Thyroid gland (tissue), 4 donors: ENCODE measurements at regions of chr1 and their contacts with region 1.

Region 1: DNA sequence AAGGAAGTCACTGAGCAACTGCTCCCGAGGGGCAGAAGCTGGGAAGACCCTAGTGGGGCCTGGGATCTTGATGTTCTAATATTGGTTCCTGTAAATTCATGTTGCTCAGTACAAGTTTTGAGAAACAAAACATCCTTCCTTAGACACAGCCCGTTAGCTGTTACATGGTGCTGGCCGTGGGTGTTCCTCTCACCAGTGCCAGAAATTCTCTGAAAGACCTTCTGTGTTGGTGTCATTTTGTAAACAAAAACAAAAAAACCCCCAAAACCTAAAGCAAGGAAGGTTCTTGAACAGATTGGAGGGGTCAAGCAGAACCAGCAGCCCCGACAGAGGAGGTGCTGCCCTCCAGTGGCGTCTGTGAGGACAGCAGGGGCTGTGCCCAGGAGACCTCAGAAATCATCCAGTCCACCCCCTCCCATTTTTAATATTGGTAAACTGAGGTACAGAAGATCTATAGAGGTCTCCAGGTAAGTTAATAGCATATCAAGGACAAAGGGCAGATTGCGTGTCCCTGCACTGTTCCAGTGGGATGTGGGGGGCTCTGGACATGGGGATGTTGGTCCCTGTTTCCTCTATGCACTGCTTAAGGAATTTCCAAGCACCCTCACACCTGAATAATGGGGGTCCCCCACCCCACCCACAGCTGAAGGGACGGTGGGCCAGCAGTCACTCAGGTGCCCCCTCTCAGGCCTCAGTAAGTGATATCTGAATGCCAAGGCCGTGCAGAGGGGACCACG is 38.2 kb downstream of the SLC2A7 start:
- DNase-seq: peak; percentile 54 to 63
- H3K4me3 ChIP-seq: no peak overlapping the region
- H3K27ac ChIP-seq: peak overlapping the region in 2 of 3 donors; percentile 24 to 27
- H3K4me1 ChIP-seq: peaks cover 0 to 12% of the 10 kb centered on the region in 2 donors
- H3K27me3 ChIP-seq: no peaks in the 10 kb centered on the region
- CTCF ChIP-seq: peak; percentile 80 to 94 (median 86)
- POLR2A ChIP-seq: no peak

Region 2: GRCh38 chr1:8862528-8862927 is 125.5 kb before region 1 on chr1:
- intact Hi-C with region 1: loop called (anchors 5 kb)
- DNase-seq: no peak
- H3K4me3 ChIP-seq: no peak overlapping the region
- H3K27ac ChIP-seq: peak overlapping the region in 1 of 3 donors; percentile 23
- H3K4me1 ChIP-seq: peaks cover 14 to 22% of the 10 kb centered on the region in 2 donors
- H3K27me3 ChIP-seq: no peaks in the 10 kb centered on the region
- CTCF ChIP-seq: peak in 3 of 6 experiments; percentile 11 to 36 (median 24)
- POLR2A ChIP-seq: no peak

Region 3: GRCh38 chr1:8922962-8923361 is 65.1 kb before region 1 on chr1:
- intact Hi-C with region 1: loop called (anchors 5 kb)
- DNase-seq: no peak
- H3K4me3 ChIP-seq: no peak overlapping the region
- H3K27ac ChIP-seq: no peak overlapping the region
- H3K4me1 ChIP-seq: peaks cover 0 to 5% of the 10 kb centered on the region in 2 donors
- H3K27me3 ChIP-seq: no peaks in the 10 kb centered on the region
- CTCF ChIP-seq: no peak
- POLR2A ChIP-seq: no peak